CD8-positive, alpha-beta memory T cell (primary cell): ENCODE measurements at regions of chr15 and their contacts with region 1.

Region 1: DNA sequence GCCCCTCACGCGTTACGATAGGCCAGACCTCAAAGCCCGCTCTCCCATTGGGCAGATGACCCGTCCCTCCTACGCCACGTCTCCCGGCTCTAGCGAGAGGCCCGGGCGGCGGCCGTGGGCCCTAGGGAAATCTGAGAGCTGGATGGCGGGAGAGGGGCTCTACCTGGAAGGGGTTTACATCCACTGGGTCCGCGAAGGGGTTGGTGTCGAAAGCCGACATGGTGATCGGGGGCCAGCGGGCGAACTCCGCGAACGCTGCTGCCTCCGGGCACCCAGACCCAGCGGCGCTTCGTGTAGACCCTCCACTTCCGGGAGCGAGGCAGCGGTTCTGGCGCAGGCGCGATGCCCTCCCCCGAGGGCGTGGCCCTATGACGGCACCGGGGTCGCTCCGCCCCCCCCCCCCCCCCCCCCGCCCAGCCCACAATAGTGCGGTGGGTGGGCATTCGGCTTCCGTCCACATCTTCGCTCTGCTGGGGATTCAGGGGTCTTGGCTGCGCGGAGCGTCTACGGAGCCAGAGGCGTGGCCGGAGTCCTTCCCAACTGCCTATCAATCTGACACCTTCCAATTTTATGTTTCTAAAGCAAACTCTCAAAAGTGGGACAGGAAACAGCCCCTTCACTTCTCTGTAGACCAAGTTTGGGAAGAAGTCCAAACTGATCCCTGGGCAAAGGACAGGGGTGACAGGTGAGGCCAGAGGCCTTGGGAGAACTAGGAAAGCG is at the start of gene SCAMP2:
- DNase-seq: peak; percentile 87 to 95 (median 93)
- H3K4me3 ChIP-seq: peak within 1 kb of the TSS; percentile 98
- H3K4me3 Mint-ChIP-seq: peak within 1 kb of the TSS; percentile 94 to 100 (median 97)
- H3K27ac ChIP-seq: peak within 1 kb of the TSS; percentile 96
- H3K27ac Mint-ChIP-seq: peak within 1 kb of the TSS; percentile 95 to 100 (median 96)
- H3K4me1 ChIP-seq: peaks cover 40% of the 10 kb centered on the region
- H3K4me1 Mint-ChIP-seq: peaks cover 43 to 54% (median 50%) of the 10 kb centered on the region in 3 donors
- H3K27me3 ChIP-seq: no peaks in the 10 kb centered on the region
- H3K27me3 Mint-ChIP-seq: no peaks in the 10 kb centered on the region
- total RNA-seq, gene SCAMP2: 82.8 to 84.2 TPM

Region 2: DNA sequence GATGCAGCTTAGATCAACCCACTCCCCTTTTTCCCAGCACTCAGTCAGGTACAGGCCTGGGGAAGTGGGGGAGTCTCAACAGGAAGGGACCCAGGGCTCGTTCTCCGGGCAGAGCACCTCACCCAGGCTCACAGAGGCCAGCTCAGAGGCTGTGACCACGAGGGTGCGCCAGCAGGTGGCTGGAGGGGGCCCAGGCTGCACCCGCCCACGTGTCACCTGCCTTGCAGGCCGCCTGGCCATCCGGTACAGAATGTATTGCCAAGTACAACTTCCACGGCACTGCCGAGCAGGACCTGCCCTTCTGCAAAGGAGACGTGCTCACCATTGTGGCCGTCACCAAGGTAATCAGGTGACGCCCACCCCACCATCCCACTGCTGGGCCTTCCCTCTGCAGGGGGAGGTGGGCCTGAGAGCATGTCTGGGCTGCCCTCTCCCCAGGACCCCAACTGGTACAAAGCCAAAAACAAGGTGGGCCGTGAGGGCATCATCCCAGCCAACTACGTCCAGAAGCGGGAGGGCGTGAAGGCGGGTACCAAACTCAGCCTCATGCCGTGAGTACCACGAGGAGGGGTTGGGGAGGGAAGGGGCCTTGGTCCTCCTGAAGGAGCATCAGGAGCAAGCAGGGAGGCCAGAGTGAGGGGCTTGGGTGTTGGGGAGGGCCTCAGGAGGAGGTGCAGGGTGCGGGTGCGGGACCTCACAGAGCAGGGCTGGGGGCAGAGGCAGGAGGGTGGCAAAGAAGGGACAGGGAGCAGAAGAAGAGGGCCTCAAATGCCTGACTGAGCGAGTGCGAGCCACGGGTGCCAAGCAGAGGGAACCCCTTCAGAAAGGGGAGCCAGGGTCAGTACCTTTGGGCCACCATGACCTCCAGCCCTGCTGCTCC is 74.6 kb before region 1 on chr15:
- CTCF ChIA-PET with region 1: no interaction called
- POLR2A ChIA-PET with region 1: no interaction called
- DNase-seq: no peak
- H3K4me3 ChIP-seq: no peak overlapping the region
- H3K4me3 Mint-ChIP-seq: peak overlapping the region in 3 of 7 donors; percentile 14 to 28 (median 24)
- H3K27ac ChIP-seq: no peak overlapping the region
- H3K27ac Mint-ChIP-seq: peak overlapping the region; percentile 75 to 97 (median 94)
- H3K4me1 ChIP-seq: peaks cover 70% of the 10 kb centered on the region
- H3K4me1 Mint-ChIP-seq: peaks cover 49 to 61% (median 52%) of the 10 kb centered on the region in 3 donors
- H3K27me3 ChIP-seq: no peaks in the 10 kb centered on the region
- H3K27me3 Mint-ChIP-seq: no peaks in the 10 kb centered on the region

Region 3: DNA sequence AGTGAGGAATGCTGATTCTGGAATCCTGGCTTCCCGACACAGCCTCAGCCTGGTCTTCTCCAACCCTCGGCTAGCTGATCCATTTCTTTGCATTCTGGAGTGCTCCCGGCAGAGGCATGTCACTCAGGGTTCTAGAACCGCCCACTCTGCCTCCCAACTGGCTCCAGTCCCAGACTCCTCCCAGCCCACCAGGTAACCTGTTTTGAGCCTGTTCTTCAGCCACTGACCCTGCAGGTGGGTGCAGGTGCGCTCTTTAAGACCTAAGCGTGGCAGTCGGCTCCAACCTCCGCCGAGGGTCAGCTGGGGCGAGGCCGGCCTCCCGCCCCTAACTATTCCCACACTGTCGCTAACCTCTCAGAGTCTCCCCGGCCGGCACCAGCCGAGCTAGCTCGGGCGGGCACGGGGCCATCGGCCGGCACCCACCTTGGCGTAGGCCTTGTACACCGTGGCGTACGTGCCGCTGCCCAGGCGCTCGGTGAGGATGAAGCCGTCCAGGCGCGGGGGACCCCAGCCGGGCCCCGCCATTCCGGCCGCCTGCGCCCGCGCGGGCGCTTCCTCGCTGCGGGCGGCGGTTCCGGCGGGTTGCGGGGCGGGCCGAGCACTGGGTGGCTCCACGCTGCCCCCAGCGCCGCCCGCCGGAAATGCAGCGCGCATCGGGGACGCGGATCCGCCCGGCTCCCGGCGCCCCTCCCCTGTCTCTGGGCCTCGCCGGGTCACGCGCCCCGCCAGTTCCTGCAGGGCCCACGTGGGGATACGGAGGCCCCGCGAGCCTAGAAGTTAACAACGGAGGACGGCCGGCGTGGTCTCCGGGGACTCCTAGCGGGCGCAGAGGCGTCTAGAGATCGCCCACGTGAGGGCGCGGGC is 30.4 kb before region 1 on chr15 and contains the start of gene ULK3:
- CTCF ChIA-PET with region 1: interaction called, 12 read pairs
- POLR2A ChIA-PET with region 1: interaction called, 4 read pairs
- DNase-seq: peak; percentile 91 to 93 (median 91)
- H3K4me3 ChIP-seq: peak within 1 kb of the TSS; percentile 88
- H3K4me3 Mint-ChIP-seq: peak within 1 kb of the TSS; percentile 83 to 96 (median 88)
- H3K27ac ChIP-seq: peak within 1 kb of the TSS; percentile 72
- H3K27ac Mint-ChIP-seq: peak within 1 kb of the TSS; percentile 87 to 98 (median 93)
- H3K4me1 ChIP-seq: peaks cover 48% of the 10 kb centered on the region
- H3K4me1 Mint-ChIP-seq: peaks cover 47 to 59% (median 50%) of the 10 kb centered on the region in 3 donors
- H3K27me3 ChIP-seq: no peaks in the 10 kb centered on the region
- H3K27me3 Mint-ChIP-seq: no peaks in the 10 kb centered on the region
- total RNA-seq, gene ULK3: 53.9 to 60.1 TPM